Activated CD4-positive, alpha-beta memory T cell treated with anti-CD3 and anti-CD28 coated beads, Interleukin-2, amount 10 ng/mL, durations not matched to agents 7 days and 5 days (primary cell): ENCODE measurements at regions of chr15 and their contacts with region 1.

Region 1: GRCh38 chr15:90931737-90932659 is at the start of gene HDDC3:
- DNase-seq: peak; percentile 93
- H3K4me3 Mint-ChIP-seq: peak within 1 kb of the TSS; percentile 99
- H3K27ac Mint-ChIP-seq: peak within 1 kb of the TSS; percentile 99
- H3K4me1 Mint-ChIP-seq: peaks cover 61% of the 10 kb centered on the region
- H3K27me3 Mint-ChIP-seq: no peaks in the 10 kb centered on the region
- total RNA-seq, gene HDDC3: 37.6 to 41.7 TPM

Region 2: DNA sequence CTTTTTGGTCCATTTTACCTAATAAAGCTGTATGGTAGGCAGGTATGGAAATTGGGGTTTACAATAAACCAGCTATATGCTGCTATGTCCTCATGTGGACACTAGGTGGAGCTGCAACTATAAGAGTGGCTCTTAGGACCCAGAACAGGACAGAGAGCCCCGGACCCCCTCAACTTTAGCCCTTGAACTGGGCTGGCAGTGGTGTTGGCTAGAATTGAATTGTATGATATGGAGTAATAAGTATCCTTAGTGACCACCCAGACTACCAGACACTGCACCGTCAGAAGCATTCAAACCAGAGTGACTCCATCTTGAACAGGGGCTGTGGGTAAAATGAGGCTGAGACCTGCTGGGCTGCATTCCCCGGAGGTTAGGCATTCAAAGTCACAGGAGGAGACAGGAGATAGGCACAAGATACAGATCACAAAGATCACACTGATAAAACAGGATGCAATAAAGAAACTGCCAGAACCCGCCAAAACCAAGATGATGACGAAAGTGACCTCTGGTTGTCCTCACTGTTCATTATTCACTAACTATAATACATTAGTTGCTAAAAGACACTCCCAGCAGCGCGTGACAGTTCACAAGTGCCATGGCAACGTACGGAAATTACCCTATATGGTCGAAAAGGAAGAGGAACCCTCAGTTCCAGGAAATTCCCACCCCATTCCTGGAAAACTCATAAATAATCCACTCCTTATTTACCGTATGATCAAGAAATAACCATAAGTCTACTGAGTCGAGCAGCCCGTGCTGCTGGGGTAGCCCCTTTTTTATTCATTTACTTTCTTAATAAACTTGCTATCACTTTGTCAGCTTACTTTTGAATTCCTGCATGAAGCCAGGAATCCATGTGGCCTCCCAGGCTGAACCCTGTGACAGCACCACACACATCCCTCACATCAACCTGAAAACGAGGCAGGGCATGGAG is 283.6 kb before region 1 on chr15:
- CTCF ChIA-PET with region 1: interaction called, 34 read pairs
- POLR2A ChIA-PET with region 1: interaction called, 8 read pairs
- DNase-seq: peak; percentile 90
- H3K4me3 Mint-ChIP-seq: peak overlapping the region; percentile 21
- H3K27ac Mint-ChIP-seq: peak overlapping the region; percentile 92
- H3K4me1 Mint-ChIP-seq: peaks cover 48% of the 10 kb centered on the region
- H3K27me3 Mint-ChIP-seq: no peaks in the 10 kb centered on the region

Region 3: GRCh38 chr15:90829942-90830440 is 102.0 kb before region 1 on chr15:
- CTCF ChIA-PET with region 1: interaction called, 14 read pairs
- POLR2A ChIA-PET with region 1: interaction called, 7 read pairs
- DNase-seq: peak; percentile 81
- H3K4me3 Mint-ChIP-seq: peak overlapping the region; percentile 58
- H3K27ac Mint-ChIP-seq: peak overlapping the region; percentile 99
- H3K4me1 Mint-ChIP-seq: peaks cover 78% of the 10 kb centered on the region
- H3K27me3 Mint-ChIP-seq: no peaks in the 10 kb centered on the region

Region 4: DNA sequence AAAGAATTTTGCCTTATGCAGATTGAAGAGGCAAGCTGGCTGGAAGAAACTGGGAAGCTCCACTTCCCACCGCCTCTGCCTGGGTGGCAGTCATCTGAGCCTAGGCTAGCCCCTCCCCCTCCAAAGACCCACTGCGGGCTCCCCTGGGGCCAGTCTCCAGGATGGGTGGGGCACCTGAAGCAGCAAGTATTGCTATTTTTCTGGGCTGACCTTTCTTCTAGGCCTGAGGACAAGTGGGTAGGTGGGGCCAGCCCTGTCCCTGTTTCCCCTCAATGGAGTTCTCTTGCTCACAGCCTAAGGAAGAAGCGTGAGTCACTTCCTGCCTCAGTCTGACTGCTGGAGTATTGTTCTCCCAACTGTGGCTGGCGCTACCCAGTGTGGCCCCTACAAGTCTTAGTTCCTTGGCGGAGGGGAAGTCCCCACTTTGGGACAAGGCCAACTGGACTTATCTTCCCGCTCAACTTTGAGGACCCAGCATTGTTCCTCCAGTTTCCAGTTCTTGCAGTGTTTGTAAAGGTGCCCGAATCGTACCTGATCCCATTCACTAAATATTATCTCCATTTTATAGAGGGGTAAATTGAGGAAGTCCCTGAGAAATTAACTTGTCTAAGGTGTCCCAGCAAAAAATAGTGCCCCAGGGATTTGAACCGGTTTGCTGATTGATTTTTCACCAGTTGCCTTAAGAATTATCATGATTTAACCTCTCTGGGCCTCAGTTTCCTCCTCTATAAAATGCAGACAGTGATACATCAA is 62.2 kb before region 1 on chr15:
- CTCF ChIA-PET with region 1: interaction called, 14 read pairs
- POLR2A ChIA-PET with region 1: interaction called, 18 read pairs
- DNase-seq: peak; percentile 63
- H3K4me3 Mint-ChIP-seq: peak overlapping the region; percentile 85
- H3K27ac Mint-ChIP-seq: peak overlapping the region; percentile 91
- H3K4me1 Mint-ChIP-seq: peaks cover 59% of the 10 kb centered on the region
- H3K27me3 Mint-ChIP-seq: no peaks in the 10 kb centered on the region

Region 5: DNA sequence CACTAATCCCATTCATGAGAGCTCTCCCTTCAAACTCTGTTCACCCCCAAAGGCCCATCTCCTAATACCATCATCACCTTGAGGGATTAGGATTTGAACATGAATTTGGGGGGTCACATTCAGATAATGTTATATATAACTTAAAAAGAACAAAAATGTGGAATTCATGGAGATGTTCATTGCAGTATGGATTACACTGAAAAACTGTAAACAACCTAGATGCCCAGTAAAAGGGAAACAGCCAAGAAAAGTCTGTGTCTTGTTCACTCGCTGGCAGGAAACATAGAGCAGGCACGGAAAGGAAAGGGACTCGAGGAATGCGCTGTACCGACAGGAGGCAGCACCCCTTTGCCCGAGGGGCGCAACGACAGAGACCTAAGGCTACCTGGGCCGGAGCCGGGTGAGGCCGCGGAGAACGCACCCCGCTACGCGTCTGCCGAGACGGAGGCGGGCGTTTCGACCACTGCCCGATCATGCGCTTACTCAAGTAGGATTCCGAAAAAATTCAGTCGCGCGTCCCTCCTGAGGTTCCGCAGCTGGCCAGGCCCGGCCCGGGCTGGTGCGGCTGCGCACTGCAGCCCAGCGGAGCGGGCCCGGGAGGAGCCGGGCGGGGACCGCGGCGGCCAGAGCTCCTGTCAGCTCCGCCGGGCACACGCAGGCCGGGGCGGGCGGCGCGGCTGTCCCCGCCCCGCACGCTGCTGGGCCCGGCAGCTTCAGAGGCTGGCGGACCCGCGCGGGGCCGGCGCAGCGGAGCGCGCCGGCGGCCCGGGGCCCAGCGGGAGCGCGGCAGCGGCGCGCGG is 29.8 kb before region 1 on chr15:
- CTCF ChIA-PET with region 1: interaction called, 210 read pairs
- POLR2A ChIA-PET with region 1: interaction called, 211 read pairs
- DNase-seq: peak; percentile 77
- H3K4me3 Mint-ChIP-seq: peak overlapping the region; percentile 80
- H3K27ac Mint-ChIP-seq: peak overlapping the region; percentile 81
- H3K4me1 Mint-ChIP-seq: peaks cover 40% of the 10 kb centered on the region
- H3K27me3 Mint-ChIP-seq: no peaks in the 10 kb centered on the region

Region 6: DNA sequence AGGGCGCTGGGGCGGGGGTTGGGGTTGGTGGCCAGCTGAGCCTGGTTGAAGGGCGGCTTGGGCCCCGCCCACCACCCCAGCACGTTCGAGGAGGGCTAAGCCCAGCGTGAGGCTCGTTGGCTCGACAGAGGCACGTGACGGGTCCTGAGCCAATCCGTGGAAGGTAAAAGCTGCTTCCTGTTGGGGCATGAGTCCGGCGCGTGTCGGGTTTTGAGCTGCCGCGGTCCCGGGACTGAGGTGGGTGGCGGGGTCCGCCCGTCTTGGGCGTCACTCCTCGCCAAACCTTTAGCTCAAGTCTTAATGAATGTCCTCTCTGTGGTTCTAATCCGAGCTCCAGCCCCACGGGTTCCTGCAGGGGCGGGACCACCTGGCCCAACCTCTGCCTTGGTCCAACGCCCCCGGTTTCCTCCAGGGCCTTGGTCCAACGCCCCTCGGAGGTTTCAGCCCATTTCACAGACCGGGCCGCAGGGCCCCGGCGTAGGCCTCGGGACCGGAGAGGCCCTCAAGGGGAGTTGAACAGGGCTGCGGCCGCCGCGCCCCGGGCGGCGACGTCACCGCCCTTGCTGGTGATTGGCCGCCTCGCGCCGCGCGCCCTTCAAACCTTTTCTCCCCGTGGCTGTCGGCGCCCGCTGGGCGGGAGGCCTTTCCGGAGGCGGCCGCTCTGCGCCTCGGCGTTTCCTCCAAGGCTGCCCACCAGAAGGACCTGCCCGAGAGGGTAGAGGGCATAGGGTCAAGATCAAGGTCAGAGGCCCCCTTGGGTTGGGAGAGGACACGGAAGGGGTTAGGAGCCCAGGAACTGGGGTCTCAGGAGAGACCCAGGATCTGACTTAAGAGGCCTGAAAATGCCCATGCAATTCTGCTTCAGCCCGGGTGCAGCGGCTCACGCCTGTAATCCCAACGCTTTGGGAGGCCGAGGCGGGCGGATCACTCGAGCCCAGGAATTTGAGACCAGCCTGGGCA is 23.0 kb after region 1 on chr15 and contains the start of gene RCCD1:
- CTCF ChIA-PET with region 1: interaction called, 167 read pairs
- POLR2A ChIA-PET with region 1: interaction called, 198 read pairs
- DNase-seq: peak; percentile 94
- H3K4me3 Mint-ChIP-seq: peak within 1 kb of the TSS; percentile 85
- H3K27ac Mint-ChIP-seq: peak within 1 kb of the TSS; percentile 93
- H3K4me1 Mint-ChIP-seq: peaks cover 31% of the 10 kb centered on the region
- H3K27me3 Mint-ChIP-seq: no peaks in the 10 kb centered on the region
- total RNA-seq, gene RCCD1: 31.3 to 32.8 TPM

Region 7: DNA sequence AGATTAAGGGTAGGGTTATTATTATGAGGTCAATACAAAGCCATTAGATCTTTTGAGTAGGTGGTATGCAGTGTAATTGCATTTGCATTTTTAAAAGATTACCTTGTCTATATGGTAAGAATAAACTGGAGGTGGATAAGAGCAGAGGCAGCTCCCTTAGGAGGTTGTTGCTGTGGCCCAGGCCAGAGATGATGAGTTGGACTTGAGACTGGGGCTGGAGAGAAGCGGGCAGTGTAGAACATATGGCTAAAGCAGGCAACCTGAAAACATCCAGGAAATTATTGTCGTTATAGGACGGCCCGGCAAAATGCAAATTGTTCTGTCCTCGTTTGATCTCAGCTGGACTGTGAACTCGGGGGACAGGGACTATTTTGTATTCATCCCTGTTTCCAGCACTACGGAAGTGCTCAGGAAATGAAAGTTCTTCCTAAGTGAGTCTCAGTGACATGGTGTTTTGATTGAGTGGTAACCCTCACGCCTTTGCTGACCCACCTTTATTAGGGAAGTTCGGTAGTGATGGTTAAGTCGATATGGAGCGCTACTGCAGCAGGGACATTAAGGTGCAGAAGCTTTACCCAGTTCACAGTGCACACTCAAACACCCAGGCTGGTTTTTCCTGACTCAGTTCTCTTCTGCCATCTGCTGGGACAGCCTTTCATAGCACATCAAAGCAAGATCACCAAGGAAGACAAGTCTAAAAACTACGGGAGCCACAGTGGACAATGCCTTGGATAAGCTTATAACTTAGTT is 117.6 kb after region 1 on chr15:
- CTCF ChIA-PET with region 1: interaction called, 28 read pairs
- POLR2A ChIA-PET with region 1: no interaction called
- DNase-seq: peak; percentile 73
- H3K4me3 Mint-ChIP-seq: no peak overlapping the region
- H3K27ac Mint-ChIP-seq: no peak overlapping the region
- H3K4me1 Mint-ChIP-seq: peaks cover 30% of the 10 kb centered on the region
- H3K27me3 Mint-ChIP-seq: peaks cover 37% of the 10 kb centered on the region

Region 8: GRCh38 chr15:91208371-91208770 is 276.4 kb after region 1 on chr15:
- CTCF ChIA-PET with region 1: no interaction called
- POLR2A ChIA-PET with region 1: no interaction called
- DNase-seq: no peak
- H3K4me3 Mint-ChIP-seq: no peak overlapping the region
- H3K27ac Mint-ChIP-seq: no peak overlapping the region
- H3K4me1 Mint-ChIP-seq: no peaks in the 10 kb centered on the region
- H3K27me3 Mint-ChIP-seq: peaks cover 23% of the 10 kb centered on the region